CD4-positive, alpha-beta memory T cell (primary cell): ENCODE measurements at regions of chr9 and their contacts with region 1.

Region 1: GRCh38 chr9:35657546-35658136 is at the start of gene RMRP:
- DNase-seq: peak; percentile 91 to 96 (median 93)
- H3K4me3 ChIP-seq: peak within 1 kb of the TSS; percentile 67 to 90
- H3K4me3 Mint-ChIP-seq: peak within 1 kb of the TSS; percentile 86 to 95 (median 92)
- H3K27ac ChIP-seq: peak within 1 kb of the TSS; percentile 96
- H3K27ac Mint-ChIP-seq: peak within 1 kb of the TSS; percentile 95 to 100 (median 99)
- H3K4me1 ChIP-seq: peaks cover 64% of the 10 kb centered on the region
- H3K4me1 Mint-ChIP-seq: peaks cover 52 to 78% (median 64%) of the 10 kb centered on the region in 4 donors
- H3K27me3 ChIP-seq: no peaks in the 10 kb centered on the region
- H3K27me3 Mint-ChIP-seq: peaks cover 2 to 4% of the 10 kb centered on the region in 2 donors
- total RNA-seq, gene RMRP: 18,678 to 21,585 TPM

Region 2: DNA sequence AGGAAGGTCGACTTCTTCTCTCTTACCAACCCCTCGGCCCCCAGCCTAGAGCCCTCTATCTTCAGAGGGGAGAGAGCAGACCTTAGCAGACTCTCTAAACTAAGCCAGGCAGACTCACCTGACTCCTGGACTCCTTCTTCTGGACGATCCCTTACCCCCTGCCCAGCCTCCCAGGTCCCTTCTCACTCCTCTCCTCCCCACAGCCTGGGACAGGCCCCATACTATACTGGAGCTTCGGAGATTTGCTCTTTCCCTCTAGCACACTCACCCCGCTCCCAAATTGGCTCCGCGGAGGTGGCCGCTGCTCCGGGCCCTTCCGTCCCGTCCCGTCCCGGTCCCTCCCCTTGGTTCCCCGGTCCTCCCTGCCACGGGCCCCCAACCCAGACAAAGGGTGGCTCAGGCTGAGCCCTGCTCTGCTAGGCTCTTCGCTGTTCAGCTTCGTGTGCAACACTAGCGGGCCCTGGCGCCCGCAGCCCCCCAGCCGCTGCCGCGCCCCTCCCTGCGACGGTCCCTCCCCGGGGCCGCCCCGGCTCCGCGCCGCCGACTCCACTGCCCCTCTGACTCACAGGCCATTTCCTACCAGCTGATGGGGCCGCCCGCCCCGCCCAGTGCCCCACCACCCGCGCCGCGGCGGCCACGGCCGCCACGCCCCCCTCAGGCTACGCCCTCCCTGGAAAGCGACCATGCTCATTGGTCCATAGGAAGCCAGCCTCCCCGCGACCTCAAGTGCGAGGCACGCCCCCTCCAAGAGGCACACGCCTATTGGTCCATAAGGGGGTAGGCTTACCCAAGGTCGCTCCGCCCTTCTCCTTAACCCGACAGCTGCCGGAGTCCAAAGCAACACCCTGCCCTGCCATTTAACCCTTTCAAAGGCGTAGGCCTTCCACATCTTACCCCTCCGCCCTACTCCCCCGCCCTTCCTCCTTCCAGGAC is 546.4 kb before region 1 on chr9:
- CTCF ChIA-PET with region 1: no interaction called
- POLR2A ChIA-PET with region 1: interaction called, 3 read pairs
- intact Hi-C with region 1: loop called (anchors 5 kb)
- DNase-seq: peak; percentile 91 to 98 (median 94)
- H3K4me3 ChIP-seq: peak overlapping the region; percentile 47 to 54
- H3K4me3 Mint-ChIP-seq: peak overlapping the region; percentile 67 to 94 (median 81)
- H3K27ac ChIP-seq: peak overlapping the region; percentile 82
- H3K27ac Mint-ChIP-seq: peak overlapping the region; percentile 88 to 96 (median 91)
- H3K4me1 ChIP-seq: peaks cover 52% of the 10 kb centered on the region
- H3K4me1 Mint-ChIP-seq: peaks cover 41 to 63% (median 47%) of the 10 kb centered on the region in 4 donors
- H3K27me3 ChIP-seq: no peaks in the 10 kb centered on the region
- H3K27me3 Mint-ChIP-seq: no peaks in the 10 kb centered on the region

Region 3: GRCh38 chr9:35611230-35611797 is 46.3 kb before region 1 on chr9:
- CTCF ChIA-PET with region 1: interaction called, 145 read pairs
- POLR2A ChIA-PET with region 1: interaction called, 80 read pairs
- intact Hi-C with region 1: no loop called
- DNase-seq: peak; percentile 45 to 63 (median 49)
- H3K4me3 ChIP-seq: no peak overlapping the region
- H3K4me3 Mint-ChIP-seq: peak overlapping the region in 1 of 8 donors; percentile 26
- H3K27ac ChIP-seq: no peak overlapping the region
- H3K27ac Mint-ChIP-seq: peak overlapping the region in 5 of 7 donors; percentile 4 to 83 (median 59)
- H3K4me1 ChIP-seq: peaks cover 19% of the 10 kb centered on the region
- H3K4me1 Mint-ChIP-seq: peaks cover 13 to 43% (median 20%) of the 10 kb centered on the region in 4 donors
- H3K27me3 ChIP-seq: no peaks in the 10 kb centered on the region
- H3K27me3 Mint-ChIP-seq: no peaks in the 10 kb centered on the region

Region 4: DNA sequence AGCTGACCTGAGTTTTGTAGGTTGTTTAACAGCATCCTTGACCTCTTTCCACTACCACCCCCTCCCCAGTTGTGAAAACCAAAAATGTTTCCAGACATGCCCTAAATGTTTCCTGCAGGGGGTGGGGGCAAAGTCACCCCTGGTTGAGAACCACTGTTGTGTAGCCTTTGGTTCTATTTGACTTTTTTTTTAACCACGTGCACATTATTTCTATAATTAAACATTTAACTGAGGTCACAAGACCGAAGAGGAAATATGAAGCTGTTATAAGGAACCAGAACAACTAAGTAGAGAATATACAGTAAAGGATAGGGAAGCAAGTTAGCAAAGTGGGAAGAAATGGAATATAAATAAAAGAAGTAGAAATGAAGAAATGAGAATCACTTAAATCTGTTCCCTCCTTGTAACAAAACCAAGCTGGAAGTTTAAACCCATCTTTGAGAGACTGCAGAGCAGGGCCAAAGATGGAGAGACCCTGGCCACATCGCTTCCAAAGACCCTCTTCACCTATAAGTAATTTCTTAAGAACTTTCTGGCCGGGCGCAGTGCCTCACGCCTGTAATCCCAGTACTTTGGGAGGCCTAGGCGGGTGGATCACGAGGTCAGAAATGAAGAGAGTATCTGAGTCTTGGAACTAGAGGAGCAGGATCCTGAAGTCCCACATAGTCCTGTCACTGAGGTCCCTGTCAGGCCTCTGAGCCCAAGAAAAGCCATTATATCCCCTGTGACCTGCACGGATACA is 21.3 kb before region 1 on chr9:
- CTCF ChIA-PET with region 1: interaction called, 11 read pairs
- POLR2A ChIA-PET with region 1: no interaction called
- intact Hi-C with region 1: no loop called
- DNase-seq: peak in 1 of 5 donors; percentile 33
- H3K4me3 ChIP-seq: no peak overlapping the region
- H3K4me3 Mint-ChIP-seq: peak overlapping the region in 3 of 8 donors; percentile 22 to 60 (median 43)
- H3K27ac ChIP-seq: no peak overlapping the region
- H3K27ac Mint-ChIP-seq: peak overlapping the region in 6 of 7 donors; percentile 6 to 71 (median 38)
- H3K4me1 ChIP-seq: peaks cover 32% of the 10 kb centered on the region
- H3K4me1 Mint-ChIP-seq: peaks cover 22 to 56% (median 41%) of the 10 kb centered on the region in 4 donors
- H3K27me3 ChIP-seq: no peaks in the 10 kb centered on the region
- H3K27me3 Mint-ChIP-seq: no peaks in the 10 kb centered on the region

Region 5: GRCh38 chr9:35748858-35749514 is 91.3 kb after region 1 on chr9 and contains the starts of genes GBA2 and RGP1:
- CTCF ChIA-PET with region 1: interaction called, 24 read pairs
- POLR2A ChIA-PET with region 1: interaction called, 27 read pairs
- intact Hi-C with region 1: loop called (anchors 1 kb)
- DNase-seq: peak; percentile 50 to 71 (median 62)
- H3K4me3 ChIP-seq: peak within 1 kb of the TSS; percentile 89 to 92
- H3K4me3 Mint-ChIP-seq: peak within 1 kb of the TSS; percentile 92 to 97 (median 94)
- H3K27ac ChIP-seq: peak within 1 kb of the TSS; percentile 82
- H3K27ac Mint-ChIP-seq: peak within 1 kb of the TSS; percentile 87 to 97 (median 96)
- H3K4me1 ChIP-seq: peaks cover 45% of the 10 kb centered on the region
- H3K4me1 Mint-ChIP-seq: peaks cover 37 to 73% (median 51%) of the 10 kb centered on the region in 4 donors
- H3K27me3 ChIP-seq: no peaks in the 10 kb centered on the region
- H3K27me3 Mint-ChIP-seq: no peaks in the 10 kb centered on the region
- total RNA-seq, gene GBA2: 61.1 to 66.3 TPM
- total RNA-seq, gene RGP1: 31.8 to 33.8 TPM

Region 6: GRCh38 chr9:35814841-35815543 is 157.4 kb after region 1 on chr9 and contains the start of gene HINT2:
- CTCF ChIA-PET with region 1: interaction called, 11 read pairs
- POLR2A ChIA-PET with region 1: interaction called, 17 read pairs
- intact Hi-C with region 1: loop called (anchors 1 kb)
- DNase-seq: peak; percentile 96 to 99 (median 98)
- H3K4me3 ChIP-seq: peak within 1 kb of the TSS; percentile 95 to 100
- H3K4me3 Mint-ChIP-seq: peak within 1 kb of the TSS; percentile 89 to 98 (median 95)
- H3K27ac ChIP-seq: peak within 1 kb of the TSS; percentile 70
- H3K27ac Mint-ChIP-seq: peak within 1 kb of the TSS; percentile 91 to 98 (median 96)
- H3K4me1 ChIP-seq: peaks cover 34% of the 10 kb centered on the region
- H3K4me1 Mint-ChIP-seq: peaks cover 20 to 50% (median 36%) of the 10 kb centered on the region in 4 donors
- H3K27me3 ChIP-seq: no peaks in the 10 kb centered on the region
- H3K27me3 Mint-ChIP-seq: no peaks in the 10 kb centered on the region
- total RNA-seq, gene HINT2: 22.9 to 30.2 TPM